Vagina (tissue), 2 donors: ENCODE measurements at regions of chr1 and their contacts with region 1.

Region 1: GRCh38 chr1:54499360-54500106 is 48.5 kb upstream of the ACOT11 start:
- DNase-seq: no peak
- H3K4me3 ChIP-seq: peak overlapping the region; percentile 38 to 51
- H3K27ac ChIP-seq: no peak overlapping the region
- H3K4me1 ChIP-seq: peaks cover 14% of the 10 kb centered on the region
- H3K27me3 ChIP-seq: no peaks in the 10 kb centered on the region
- CTCF ChIP-seq: peak in 1 of 3 experiments; percentile 12
- POLR2A ChIP-seq: no peak

Region 2: GRCh38 chr1:54121482-54122134 is 377.9 kb before region 1 on chr1:
- intact Hi-C with region 1: loop called (anchors 5 kb)
- DNase-seq: no peak
- H3K4me3 ChIP-seq: peak overlapping the region in 1 of 2 donors; percentile 38
- H3K27ac ChIP-seq: no peak overlapping the region
- H3K4me1 ChIP-seq: peaks cover 13% of the 10 kb centered on the region
- H3K27me3 ChIP-seq: no peaks in the 10 kb centered on the region
- CTCF ChIP-seq: peak; percentile 28 to 74 (median 59)
- POLR2A ChIP-seq: no peak